ENCODE measurements at regions of chr6 and their contacts with region 1.

Region 1: DNA sequence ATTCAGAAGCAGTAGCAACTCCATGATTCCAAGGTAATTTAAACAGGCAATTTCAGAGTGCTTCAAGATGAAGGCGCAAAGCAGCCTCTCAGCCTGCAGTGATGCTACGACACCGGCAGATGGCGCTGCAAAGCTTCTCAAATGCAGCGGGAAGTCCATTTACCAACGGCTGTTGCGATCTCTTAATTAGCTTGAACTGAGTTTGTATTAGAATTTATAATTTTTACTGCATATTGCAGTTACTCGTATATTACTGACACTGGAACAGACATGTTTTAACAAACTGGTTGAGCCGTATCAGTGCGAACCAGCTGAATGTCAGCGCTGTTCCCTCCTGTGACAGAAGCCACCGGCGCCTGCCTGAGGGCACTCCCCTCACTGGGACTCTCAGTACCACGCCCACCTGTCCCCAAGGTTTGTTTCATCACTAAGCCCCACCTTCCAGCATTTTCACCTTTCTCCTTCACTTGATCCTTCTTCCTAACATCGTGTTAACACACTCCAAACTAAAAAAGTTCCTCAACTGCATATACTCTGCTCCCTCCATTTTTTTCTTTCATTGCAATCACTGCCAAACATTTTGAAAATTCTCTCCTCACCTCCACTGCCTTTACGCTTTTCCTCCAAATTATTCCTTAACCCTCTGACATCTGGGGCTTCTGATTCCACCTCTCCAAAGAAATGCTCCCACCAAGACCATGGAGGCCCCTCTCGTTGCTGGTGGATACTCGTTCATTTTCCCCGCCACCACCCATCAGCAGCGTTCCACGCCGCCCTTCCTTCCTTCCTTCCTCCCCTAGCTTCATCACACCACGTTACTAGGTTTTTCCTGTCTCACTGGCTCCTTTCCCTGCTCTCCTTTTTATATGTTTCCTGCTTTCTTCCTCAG is 14.5 kb downstream of the GNL1 start:
- DNase-seq: peak; percentile 57 to 87
- H3K4me3 ChIP-seq: peak overlapping the region; percentile 13 to 59 (median 45); a peak in 7 of 8 replicates
- H3K27ac ChIP-seq: no peak overlapping the region
- H3K4me1 ChIP-seq: no peaks in the 10 kb centered on the region
- H3K27me3 ChIP-seq: no peaks in the 10 kb centered on the region
- CTCF ChIP-seq: peak; percentile 87 to 97 (median 91)
- EP300 ChIP-seq: no peak
- POLR2A ChIP-seq: peak in 1 of 2 experiments; percentile 33; a peak in 1 of 3 replicates
- RAD21 ChIP-seq: peak; percentile 52 to 65

Region 2: DNA sequence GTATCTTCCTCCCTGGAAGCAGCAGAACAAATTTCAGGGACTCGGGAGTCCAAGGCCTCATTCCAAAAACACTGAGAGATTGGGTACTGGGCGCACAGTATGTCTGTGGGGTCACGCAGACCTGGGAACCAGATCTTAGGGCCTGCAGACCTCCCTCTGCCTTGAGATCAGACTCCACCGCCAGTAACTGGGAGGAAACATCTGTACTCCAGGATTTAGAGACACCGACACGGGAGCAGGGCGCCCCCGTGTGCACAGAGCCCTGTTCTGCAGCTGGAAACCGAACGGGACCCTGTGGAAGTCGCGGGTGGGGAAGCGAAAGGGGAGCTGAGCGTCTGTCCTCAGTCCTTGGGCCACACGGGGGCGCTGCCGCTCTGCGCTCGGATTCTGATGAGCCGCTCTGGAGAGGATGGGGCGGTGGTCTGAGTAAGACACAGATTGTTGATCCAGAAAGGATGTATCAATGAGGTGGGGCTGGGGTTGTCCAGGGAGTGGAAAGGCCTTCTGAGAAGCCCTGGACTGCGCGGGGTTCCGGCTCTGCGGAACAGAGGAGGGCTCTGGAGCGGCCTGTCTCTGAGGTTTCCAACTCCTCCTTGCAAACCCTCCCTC is 88.1 kb before region 1 on chr6:
- CTCF ChIA-PET with region 1: interaction called, 13 read pairs
- POLR2A ChIA-PET with region 1: no interaction called
- DNase-seq: peak; percentile 84 to 99
- H3K4me3 ChIP-seq: no peak overlapping the region
- H3K27ac ChIP-seq: no peak overlapping the region
- H3K4me1 ChIP-seq: peaks cover 0 to 3% (median under 1%) of the 10 kb centered on the region in 4 experiments; a peak in 3 of 7 replicates
- H3K27me3 ChIP-seq: peaks cover 0 to 36% (median 23%) of the 10 kb centered on the region in 4 experiments; a peak in 6 of 7 replicates
- CTCF ChIP-seq: peak; percentile 93 to 97 (median 94)
- EP300 ChIP-seq: no peak
- POLR2A ChIP-seq: no peak
- RAD21 ChIP-seq: peak; percentile 75 to 83

Region 3: GRCh38 chr6:30489081-30490025 is 52.4 kb before region 1 on chr6 and contains the start of gene HLA-E:
- CTCF ChIA-PET with region 1: interaction called, 326 read pairs
- POLR2A ChIA-PET with region 1: interaction called, 7 read pairs
- DNase-seq: peak; percentile 87 to 94
- H3K4me3 ChIP-seq: peak within 1 kb of the TSS; percentile 79 to 94 (median 86)
- H3K27ac ChIP-seq: peak within 1 kb of the TSS; percentile 30; the same call in 1 of the 2 replicates
- H3K4me1 ChIP-seq: peaks cover 0 to 5% (median 2%) of the 10 kb centered on the region in 4 experiments; a peak in 5 of 7 replicates
- H3K27me3 ChIP-seq: no peaks in the 10 kb centered on the region; a peak in 1 of 7 replicates
- CTCF ChIP-seq: no peak
- EP300 ChIP-seq: no peak
- POLR2A ChIP-seq: peak; percentile 98
- RAD21 ChIP-seq: 0 out of 4 replicates have a peak, but pooled peaks of 1 of the 2 experiments have one; percentile 2
- total RNA-seq, gene HLA-E: 24.4 and 28.0 TPM in 2 replicates

Region 4: GRCh38 chr6:30515932-30516753 is 25.6 kb before region 1 on chr6:
- CTCF ChIA-PET with region 1: interaction called, 10 read pairs
- POLR2A ChIA-PET with region 1: interaction called, 4 read pairs
- DNase-seq: peak; percentile 65 to 83
- H3K4me3 ChIP-seq: peak overlapping the region; percentile 41 to 58 (median 56); a peak in 7 of 8 replicates
- H3K27ac ChIP-seq: peak overlapping the region; percentile 48
- H3K4me1 ChIP-seq: peaks cover 2 to 6% (median 4%) of the 10 kb centered on the region in 4 experiments; a peak in 2 of 7 replicates
- H3K27me3 ChIP-seq: no peaks in the 10 kb centered on the region
- CTCF ChIP-seq: no peak
- EP300 ChIP-seq: no peak
- POLR2A ChIP-seq: peak in 1 of 2 experiments; percentile 73; a peak in 2 of 3 replicates
- RAD21 ChIP-seq: no peak

Region 5: DNA sequence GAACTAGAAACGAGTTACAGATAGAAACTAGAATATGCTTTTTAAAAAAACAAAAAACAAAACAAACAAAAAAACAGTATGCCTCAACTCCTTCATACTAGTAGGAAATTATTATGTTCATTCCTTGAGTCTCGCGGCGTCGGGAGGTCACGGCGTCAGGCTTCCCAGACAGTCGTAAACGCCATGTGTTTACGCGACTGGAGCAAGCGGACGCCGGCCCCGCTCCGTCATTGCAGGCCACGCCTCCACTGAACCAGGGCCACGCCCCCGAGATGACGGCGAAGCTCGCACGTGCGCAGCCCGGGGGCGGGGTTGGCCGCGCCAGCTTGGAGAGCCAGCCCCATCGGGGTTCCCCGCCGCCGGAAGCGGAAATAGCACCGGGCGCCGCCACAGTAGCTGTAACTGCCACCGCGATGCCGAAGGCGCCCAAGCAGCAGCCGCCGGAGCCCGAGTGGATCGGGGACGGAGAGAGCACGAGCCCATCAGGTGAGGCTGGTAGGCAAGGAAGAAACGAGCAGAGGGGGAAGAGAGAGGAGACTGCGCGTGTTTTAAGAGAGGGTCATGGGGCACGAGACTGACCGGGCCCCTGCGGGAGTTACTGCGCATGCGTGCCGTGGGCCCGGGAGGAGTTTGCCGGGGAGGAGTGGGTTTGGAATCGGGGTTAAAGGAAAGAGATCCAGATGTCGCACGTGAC is 29.5 kb after region 1 on chr6 and contains the start of gene ABCF1:
- CTCF ChIA-PET with region 1: interaction called, 14 read pairs
- POLR2A ChIA-PET with region 1: interaction called, 4 read pairs
- DNase-seq: peak; percentile 90 to 100
- H3K4me3 ChIP-seq: peak within 1 kb of the TSS; percentile 88 to 98 (median 95)
- H3K27ac ChIP-seq: peak within 1 kb of the TSS; percentile 95
- H3K4me1 ChIP-seq: peaks cover 0 to 4% (median 2%) of the 10 kb centered on the region in 4 experiments; a peak in 5 of 7 replicates
- H3K27me3 ChIP-seq: no peaks in the 10 kb centered on the region
- CTCF ChIP-seq: no peak
- EP300 ChIP-seq: no peak
- POLR2A ChIP-seq: peak in 1 of 2 experiments; percentile 94; a peak in 2 of 3 replicates
- RAD21 ChIP-seq: no peak
- total RNA-seq, gene ABCF1: 119 and 123 TPM in 2 replicates